A549 (cell line): ENCODE measurements at regions of chr3 and their contacts with region 1.

Region 1: GRCh38 chr3:33372218-33373081 is 67.8 kb downstream of the UBP1 start:
- DNase-seq: peak; percentile 29 to 53
- ATAC-seq: peak; percentile 70 to 78
- H3K4me3 ChIP-seq: no peak overlapping the region
- H3K27ac ChIP-seq: no peak overlapping the region
- H3K4me1 ChIP-seq: peaks cover 5% of the 10 kb centered on the region; the same call in 1 of the 3 replicates
- CTCF ChIP-seq: peak; percentile 92
- EP300 ChIP-seq: no peak
- POLR2A ChIP-seq: no peak
- RAD21 ChIP-seq: peak; percentile 88 to 89

Region 2: DNA sequence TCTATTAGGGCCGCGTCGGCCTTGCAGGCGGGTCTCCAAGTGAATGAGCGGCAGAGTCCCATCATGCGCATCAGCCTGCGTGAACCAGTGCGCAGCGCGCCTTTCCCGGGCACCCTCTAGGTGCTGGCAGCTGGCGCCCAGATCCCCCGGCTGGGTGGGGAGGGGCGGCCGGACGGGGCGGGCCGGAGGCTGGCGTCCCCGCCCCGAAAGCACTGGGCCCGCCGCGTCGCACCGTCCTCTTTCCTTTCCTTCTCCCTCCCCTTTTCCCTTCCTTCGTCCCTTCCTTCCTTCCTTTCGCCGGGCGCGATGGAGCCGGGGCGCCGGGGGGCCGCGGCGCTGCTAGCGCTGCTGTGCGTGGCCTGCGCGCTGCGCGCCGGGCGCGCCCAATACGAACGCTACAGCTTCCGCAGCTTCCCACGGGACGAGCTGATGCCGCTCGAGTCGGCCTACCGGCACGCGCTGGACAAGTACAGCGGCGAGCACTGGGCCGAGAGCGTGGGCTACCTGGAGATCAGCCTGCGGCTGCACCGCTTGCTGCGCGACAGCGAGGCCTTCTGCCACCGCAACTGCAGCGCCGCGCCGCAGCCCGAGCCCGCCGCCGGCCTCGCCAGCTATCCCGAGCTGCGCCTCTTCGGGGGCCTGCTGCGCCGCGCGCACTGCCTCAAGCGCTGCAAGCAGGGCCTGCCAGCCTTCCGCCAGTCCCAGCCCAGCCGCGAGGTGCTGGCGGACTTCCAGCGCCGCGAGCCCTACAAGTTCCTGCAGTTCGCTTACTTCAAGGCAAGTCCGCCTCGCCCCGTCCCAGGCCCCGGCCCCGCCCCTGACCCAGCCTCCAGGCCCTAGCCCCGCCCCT is 258.5 kb before region 1 on chr3 and contains the start of gene CRTAP:
- CTCF ChIA-PET with region 1: interaction called, 15 read pairs
- POLR2A ChIA-PET with region 1: no interaction called
- DNase-seq: peak; percentile 70 to 97
- ATAC-seq: peak; percentile 87 to 92
- H3K4me3 ChIP-seq: peak within 1 kb of the TSS; percentile 59
- H3K27ac ChIP-seq: peak within 1 kb of the TSS; percentile 82 to 96
- H3K4me1 ChIP-seq: peaks cover 15% of the 10 kb centered on the region
- CTCF ChIP-seq: no peak; the same call in 2 of the 3 replicates
- EP300 ChIP-seq: no peak
- POLR2A ChIP-seq: peak; percentile 71
- RAD21 ChIP-seq: no peak
- polyA plus RNA-seq, gene CRTAP: 355 and 384 TPM in 2 replicates

Region 3: DNA sequence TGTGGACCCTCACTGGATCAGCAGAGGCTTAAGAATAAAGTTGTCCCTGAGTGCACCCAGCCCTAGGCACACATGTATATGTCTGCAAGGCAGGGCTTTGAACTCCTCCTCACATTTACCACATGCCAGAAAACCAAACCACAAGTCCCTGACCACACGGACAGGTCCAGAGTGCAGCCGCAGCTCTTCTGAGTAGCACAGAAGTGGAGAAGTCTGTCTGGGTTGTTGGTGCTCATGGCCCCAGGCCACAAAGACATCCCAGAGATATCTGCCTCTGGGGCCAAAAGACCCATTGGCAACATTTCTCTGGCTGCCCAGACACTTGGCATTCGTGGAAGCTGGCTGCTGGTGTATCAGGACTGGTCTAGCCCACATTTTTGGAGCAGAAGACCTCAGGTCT is 171.3 kb before region 1 on chr3:
- CTCF ChIA-PET with region 1: no interaction called
- POLR2A ChIA-PET with region 1: no interaction called
- DNase-seq: no peak
- ATAC-seq: no peak
- H3K4me3 ChIP-seq: no peak overlapping the region
- H3K27ac ChIP-seq: no peak overlapping the region
- H3K4me1 ChIP-seq: peaks cover 9% of the 10 kb centered on the region; the same call in 1 of the 3 replicates
- CTCF ChIP-seq: no peak
- EP300 ChIP-seq: no peak
- POLR2A ChIP-seq: no peak
- RAD21 ChIP-seq: no peak

Region 4: GRCh38 chr3:33250712-33251111 is 121.7 kb before region 1 on chr3:
- CTCF ChIA-PET with region 1: interaction called, 11 read pairs
- POLR2A ChIA-PET with region 1: no interaction called
- DNase-seq: no peak
- ATAC-seq: no peak
- H3K4me3 ChIP-seq: no peak overlapping the region
- H3K27ac ChIP-seq: no peak overlapping the region
- H3K4me1 ChIP-seq: no peaks in the 10 kb centered on the region
- CTCF ChIP-seq: no peak
- EP300 ChIP-seq: no peak
- POLR2A ChIP-seq: no peak
- RAD21 ChIP-seq: no peak

Region 5: GRCh38 chr3:33299395-33300081 is 72.9 kb before region 1 on chr3:
- CTCF ChIA-PET with region 1: interaction called, 11 read pairs
- POLR2A ChIA-PET with region 1: no interaction called
- DNase-seq: peak; percentile 13 to 18
- ATAC-seq: peak in 1 of 2 experiments; percentile 57; a peak in 3 of 6 replicates
- H3K4me3 ChIP-seq: no peak overlapping the region
- H3K27ac ChIP-seq: peak overlapping the region in 1 of 2 experiments; percentile 25; a peak in 1 of 6 replicates
- H3K4me1 ChIP-seq: peaks cover 23% of the 10 kb centered on the region
- CTCF ChIP-seq: no peak
- EP300 ChIP-seq: no peak
- POLR2A ChIP-seq: no peak
- RAD21 ChIP-seq: no peak

Region 6: GRCh38 chr3:33385423-33385822 is 13.0 kb after region 1 on chr3:
- CTCF ChIA-PET with region 1: interaction called, 38 read pairs
- POLR2A ChIA-PET with region 1: no interaction called
- DNase-seq: peak in 1 of 2 experiments; percentile 12
- ATAC-seq: no peak
- H3K4me3 ChIP-seq: no peak overlapping the region
- H3K27ac ChIP-seq: no peak overlapping the region
- H3K4me1 ChIP-seq: peaks cover 24% of the 10 kb centered on the region
- CTCF ChIP-seq: no peak
- EP300 ChIP-seq: no peak
- POLR2A ChIP-seq: no peak
- RAD21 ChIP-seq: no peak

Region 7: DNA sequence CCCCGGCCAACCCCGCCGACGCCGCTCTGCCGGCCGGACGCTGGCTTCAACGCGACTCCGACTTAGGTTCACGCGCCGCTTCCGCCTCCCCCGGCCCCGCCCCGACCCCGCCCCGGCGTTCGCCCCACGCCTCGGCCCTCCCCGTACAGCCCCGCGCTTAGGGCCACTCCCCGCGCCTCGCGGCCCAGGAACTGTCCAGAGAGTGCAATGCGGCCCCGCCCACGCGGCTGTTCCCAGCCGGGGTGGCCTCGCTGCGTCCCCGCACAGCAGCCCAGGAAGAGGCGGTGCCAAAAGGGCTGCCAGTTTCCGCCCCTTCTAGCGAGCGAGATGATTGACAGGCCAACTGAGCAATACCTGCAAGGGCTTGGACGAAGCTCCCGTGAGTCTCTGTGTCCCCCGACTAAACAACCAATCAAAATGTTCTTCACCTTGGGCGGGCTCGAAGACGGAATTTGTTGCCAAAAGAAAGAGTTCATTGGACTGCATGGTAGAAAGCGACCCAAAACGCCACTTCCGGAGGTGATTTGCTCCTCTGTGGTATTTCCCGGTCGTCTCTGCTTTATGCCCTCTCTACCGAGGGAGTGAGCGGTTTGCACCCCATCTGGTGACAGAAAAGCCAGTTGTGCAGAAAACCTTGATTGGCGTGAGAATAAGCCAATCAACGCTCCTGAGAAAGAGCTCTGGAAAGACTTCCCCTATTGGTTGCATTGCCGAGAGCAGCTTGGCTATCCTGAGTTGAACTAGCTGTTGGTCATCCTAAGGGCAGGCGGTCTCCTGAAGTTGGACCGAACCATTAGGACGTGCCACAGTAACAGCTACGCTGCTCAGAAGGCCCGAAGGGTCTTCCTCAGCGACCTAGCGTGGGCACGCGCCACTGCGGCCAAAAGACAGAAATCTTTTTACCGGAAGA is 68.1 kb after region 1 on chr3 and contains the start of gene UBP1:
- CTCF ChIA-PET with region 1: interaction called, 20 read pairs
- POLR2A ChIA-PET with region 1: interaction called, 9 read pairs
- DNase-seq: peak; percentile 99 to 100
- ATAC-seq: peak; percentile 82 to 93
- H3K4me3 ChIP-seq: peak within 1 kb of the TSS; percentile 79
- H3K27ac ChIP-seq: peak within 1 kb of the TSS; percentile 96 to 98
- H3K4me1 ChIP-seq: peaks cover 31% of the 10 kb centered on the region
- CTCF ChIP-seq: no peak
- EP300 ChIP-seq: no peak
- POLR2A ChIP-seq: peak; percentile 95
- RAD21 ChIP-seq: no peak
- polyA plus RNA-seq, gene UBP1: 92.5 and 92.9 TPM in 2 replicates

Region 8: DNA sequence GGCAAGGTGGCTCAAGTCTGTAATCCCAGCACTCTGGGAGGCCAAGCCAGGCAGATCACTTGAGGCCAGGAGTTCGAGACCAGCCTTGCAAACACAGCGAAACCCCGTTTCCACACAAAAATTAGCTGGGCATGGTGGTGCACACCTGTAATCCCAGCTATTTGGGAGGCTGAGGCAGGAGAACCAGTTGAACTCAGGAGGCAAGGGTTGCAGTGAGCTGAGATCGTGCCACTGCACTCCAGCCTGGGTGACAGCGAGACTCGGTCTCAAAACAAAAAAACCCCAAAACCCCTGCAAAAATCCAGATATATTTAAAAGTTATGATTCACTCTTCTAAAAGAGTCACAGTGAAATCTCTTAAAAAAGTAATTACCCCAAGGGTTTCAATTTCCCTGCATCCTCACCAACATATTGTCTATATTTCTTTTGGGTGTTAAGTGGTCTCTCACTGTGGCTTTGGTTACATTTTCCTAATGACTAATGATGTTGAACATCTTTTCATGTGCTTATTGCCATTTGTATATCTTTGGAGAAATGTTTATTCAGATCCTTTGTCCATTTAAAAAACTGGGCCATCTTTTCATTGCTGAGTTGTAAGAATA is 140.9 kb after region 1 on chr3:
- CTCF ChIA-PET with region 1: no interaction called
- POLR2A ChIA-PET with region 1: no interaction called
- DNase-seq: no peak
- ATAC-seq: no peak
- H3K4me3 ChIP-seq: no peak overlapping the region
- H3K27ac ChIP-seq: no peak overlapping the region
- H3K4me1 ChIP-seq: no peaks in the 10 kb centered on the region
- CTCF ChIP-seq: no peak
- EP300 ChIP-seq: no peak
- POLR2A ChIP-seq: no peak
- RAD21 ChIP-seq: no peak